Dorsolateral prefrontal cortex (tissue), 120 donors: ENCODE measurements at regions of chrX and their contacts with region 1.

Region 1: GRCh38 chrX:19625612-19626011 is 110.3 kb upstream of the MAP3K15 start:
- DNase-seq: no peak
- H3K4me3 ChIP-seq: no peak overlapping the region
- H3K27ac ChIP-seq: peak overlapping the region in 3 of 59 donors; percentile 15 to 32 (median 28)
- H3K27me3 ChIP-seq: peaks cover 0 to 68% (median 14%) of the 10 kb centered on the region in 45 donors
- CTCF ChIP-seq: no peak

Region 2: GRCh38 chrX:19666950-19667349 is 41.3 kb after region 1 on chrX:
- intact Hi-C with region 1: loop called in 1 of 2 experiments (anchors 5 kb)
- DNase-seq: no peak
- H3K4me3 ChIP-seq: peak overlapping the region in 7 of 59 donors; percentile 0 to 15 (median 5)
- H3K27ac ChIP-seq: peak overlapping the region in 26 of 59 donors; percentile 1 to 76 (median 34)
- H3K27me3 ChIP-seq: peaks cover 0 to 57% (median 10%) of the 10 kb centered on the region in 45 donors
- CTCF ChIP-seq: no peak